Thyroid gland (tissue), 4 donors: ENCODE measurements at regions of chr12 and their contacts with region 1.

Region 1: GRCh38 chr12:110600254-110600653 is 13.7 kb upstream of the TCTN1 start:
- DNase-seq: no peak
- H3K4me3 ChIP-seq: no peak overlapping the region
- H3K27ac ChIP-seq: no peak overlapping the region
- H3K4me1 ChIP-seq: peaks cover 0 to 3% of the 10 kb centered on the region in 2 donors
- H3K27me3 ChIP-seq: no peaks in the 10 kb centered on the region
- CTCF ChIP-seq: peak in 5 of 6 experiments; percentile 24 to 69 (median 44)
- POLR2A ChIP-seq: no peak

Region 2: GRCh38 chr12:109995686-109996482 is 604.4 kb before region 1 on chr12 and contains the start of gene GIT2:
- intact Hi-C with region 1: no loop called
- DNase-seq: peak; percentile 95 to 97
- H3K4me3 ChIP-seq: peak within 1 kb of the TSS; percentile 12 to 98 (median 96)
- H3K27ac ChIP-seq: peak within 1 kb of the TSS; percentile 67 to 83 (median 82)
- H3K4me1 ChIP-seq: peaks cover 11 to 29% of the 10 kb centered on the region in 2 donors
- H3K27me3 ChIP-seq: no peaks in the 10 kb centered on the region
- CTCF ChIP-seq: peak in 1 of 6 experiments; percentile 10
- POLR2A ChIP-seq: peak; percentile 67 to 94
- total RNA-seq, gene GIT2: 54.4 to 69.4 (median 60.1) TPM

Region 3: DNA sequence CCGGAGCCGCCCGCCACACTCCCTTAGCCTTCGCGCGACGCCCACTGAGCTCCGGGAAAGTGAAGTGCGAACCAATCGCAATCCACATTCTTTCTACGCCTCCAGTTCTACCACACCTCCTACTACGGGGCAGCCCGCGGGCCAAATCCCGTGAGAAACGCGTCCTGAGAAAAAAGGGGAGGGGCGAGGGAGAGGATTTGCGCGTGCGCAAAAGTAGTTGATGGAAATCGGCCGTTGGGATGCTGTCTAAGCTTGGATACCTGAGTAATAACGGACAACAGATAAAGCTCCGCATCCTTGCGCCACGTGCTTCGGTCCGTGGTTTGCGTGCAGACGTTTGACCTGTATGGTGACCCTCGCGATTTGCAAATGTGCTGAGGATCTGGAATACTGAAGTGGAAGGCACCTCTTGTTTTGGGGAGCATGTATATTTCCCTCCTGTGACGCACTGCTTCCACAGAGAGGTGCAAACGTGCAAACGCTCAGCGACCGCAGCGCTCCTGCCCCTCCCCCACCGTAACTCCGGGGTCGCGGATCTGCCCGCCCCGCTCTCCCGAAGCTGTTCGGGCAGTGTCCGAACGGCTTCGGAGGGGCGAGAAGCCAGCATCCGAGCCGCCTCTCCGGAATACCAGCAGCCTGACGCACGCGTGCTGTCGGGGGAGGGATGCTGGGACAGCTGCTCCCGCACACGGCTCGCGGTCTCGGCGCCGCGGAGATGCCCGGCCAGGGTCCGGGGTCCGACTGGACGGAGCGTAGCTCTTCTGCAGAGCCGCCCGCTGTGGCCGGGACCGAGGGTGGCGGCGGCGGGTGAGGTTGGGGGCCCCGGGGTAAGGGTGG is 131.8 kb before region 1 on chr12 and contains the starts of genes FAM216A and GPN3:
- intact Hi-C with region 1: loop called (anchors 5 kb)
- DNase-seq: peak; percentile 96 to 98
- H3K4me3 ChIP-seq: peak within 1 kb of the TSS; percentile 79 to 90 (median 84)
- H3K27ac ChIP-seq: peak within 1 kb of the TSS; percentile 70 to 94 (median 73)
- H3K4me1 ChIP-seq: peaks cover 20 to 21% of the 10 kb centered on the region in 2 donors
- H3K27me3 ChIP-seq: no peaks in the 10 kb centered on the region
- CTCF ChIP-seq: no peak
- POLR2A ChIP-seq: peak in 1 of 2 donors; percentile 82
- total RNA-seq, gene FAM216A: 2.6 to 10.1 (median 5.5) TPM
- total RNA-seq, gene GPN3: 17.1 to 23.6 (median 17.9) TPM

Region 4: GRCh38 chr12:110508071-110508586 is 92.1 kb before region 1 on chr12:
- intact Hi-C with region 1: loop called (anchors 2 kb)
- DNase-seq: no peak
- H3K4me3 ChIP-seq: no peak overlapping the region
- H3K27ac ChIP-seq: no peak overlapping the region
- H3K4me1 ChIP-seq: peaks cover 0 to 4% of the 10 kb centered on the region in 2 donors
- H3K27me3 ChIP-seq: no peaks in the 10 kb centered on the region
- CTCF ChIP-seq: no peak
- POLR2A ChIP-seq: no peak

Region 5: DNA sequence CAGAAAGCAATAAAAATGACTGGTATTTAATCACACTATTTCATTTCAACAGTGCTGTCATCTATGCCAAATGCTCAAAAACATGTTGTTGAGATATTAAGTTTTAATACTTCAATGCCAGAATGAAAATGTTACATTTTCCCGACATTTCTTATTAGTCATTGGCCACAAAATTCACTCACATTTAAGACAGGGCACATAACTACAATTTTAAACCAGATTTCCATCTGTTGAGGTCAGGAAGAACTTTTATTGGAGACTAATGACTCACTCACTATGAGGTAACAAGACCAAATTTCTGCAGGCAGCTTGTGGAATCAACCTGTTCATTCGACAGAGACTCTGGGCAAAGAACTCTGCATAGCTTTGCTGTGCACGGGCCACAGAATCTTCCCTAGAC is 53.9 kb before region 1 on chr12:
- intact Hi-C with region 1: loop called (anchors 5 kb)
- DNase-seq: no peak
- H3K4me3 ChIP-seq: no peak overlapping the region
- H3K27ac ChIP-seq: no peak overlapping the region
- H3K4me1 ChIP-seq: peaks cover 15 to 31% of the 10 kb centered on the region in 2 donors
- H3K27me3 ChIP-seq: no peaks in the 10 kb centered on the region
- CTCF ChIP-seq: no peak
- POLR2A ChIP-seq: no peak

Region 6: DNA sequence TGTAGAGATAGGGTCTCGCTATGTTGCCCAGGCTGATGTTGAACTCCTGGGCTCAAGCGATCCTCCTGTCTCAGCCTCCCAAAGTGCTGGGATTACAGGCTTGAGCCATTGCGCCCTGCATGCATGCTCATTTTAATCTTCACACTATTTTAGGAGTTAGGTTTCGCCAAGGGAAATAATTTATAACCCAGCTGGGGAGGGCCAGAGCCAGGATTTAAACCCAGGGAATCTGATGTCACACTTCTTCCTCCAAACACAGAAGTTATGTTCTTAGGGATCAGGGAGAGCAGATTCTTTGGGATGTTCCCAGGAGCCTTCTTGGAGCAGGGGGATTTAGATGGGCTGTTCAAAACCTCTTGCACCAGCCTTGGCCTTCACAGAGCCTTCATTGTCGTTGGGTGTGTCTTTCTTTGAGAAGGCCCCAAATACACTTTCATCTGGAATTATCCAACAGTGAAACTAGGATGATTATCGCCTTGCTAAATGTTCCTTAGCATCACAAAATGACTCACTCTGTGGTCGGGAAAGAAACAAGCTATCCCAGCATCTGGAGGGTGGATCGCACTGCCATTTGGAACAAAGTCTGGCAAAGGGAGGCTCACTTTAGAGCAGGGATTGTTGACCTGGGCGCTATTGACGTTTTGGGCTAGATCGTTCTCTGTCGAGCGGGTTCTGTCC is 150.7 kb after region 1 on chr12:
- intact Hi-C with region 1: no loop called
- DNase-seq: no peak
- H3K4me3 ChIP-seq: no peak overlapping the region
- H3K27ac ChIP-seq: no peak overlapping the region
- H3K4me1 ChIP-seq: no peaks in the 10 kb centered on the region
- H3K27me3 ChIP-seq: no peaks in the 10 kb centered on the region
- CTCF ChIP-seq: no peak
- POLR2A ChIP-seq: no peak